Motor neuron (in vitro differentiated cells): ENCODE measurements at regions of chr20 and their contacts with region 1.

Region 1: GRCh38 chr20:62386383-62387218 is at the start of gene RPS21:
- ATAC-seq: peak; percentile 75 to 89 (median 85)
- H3K4me3 ChIP-seq: peak within 1 kb of the TSS; percentile 79 to 97 (median 87)
- H3K27ac ChIP-seq: peak within 1 kb of the TSS; percentile 91 to 92
- H3K4me1 ChIP-seq: peaks cover 11 to 15% of the 10 kb centered on the region in 2 donors
- total RNA-seq, gene RPS21: 960 to 3,776 (median 2,338) TPM

Region 2: DNA sequence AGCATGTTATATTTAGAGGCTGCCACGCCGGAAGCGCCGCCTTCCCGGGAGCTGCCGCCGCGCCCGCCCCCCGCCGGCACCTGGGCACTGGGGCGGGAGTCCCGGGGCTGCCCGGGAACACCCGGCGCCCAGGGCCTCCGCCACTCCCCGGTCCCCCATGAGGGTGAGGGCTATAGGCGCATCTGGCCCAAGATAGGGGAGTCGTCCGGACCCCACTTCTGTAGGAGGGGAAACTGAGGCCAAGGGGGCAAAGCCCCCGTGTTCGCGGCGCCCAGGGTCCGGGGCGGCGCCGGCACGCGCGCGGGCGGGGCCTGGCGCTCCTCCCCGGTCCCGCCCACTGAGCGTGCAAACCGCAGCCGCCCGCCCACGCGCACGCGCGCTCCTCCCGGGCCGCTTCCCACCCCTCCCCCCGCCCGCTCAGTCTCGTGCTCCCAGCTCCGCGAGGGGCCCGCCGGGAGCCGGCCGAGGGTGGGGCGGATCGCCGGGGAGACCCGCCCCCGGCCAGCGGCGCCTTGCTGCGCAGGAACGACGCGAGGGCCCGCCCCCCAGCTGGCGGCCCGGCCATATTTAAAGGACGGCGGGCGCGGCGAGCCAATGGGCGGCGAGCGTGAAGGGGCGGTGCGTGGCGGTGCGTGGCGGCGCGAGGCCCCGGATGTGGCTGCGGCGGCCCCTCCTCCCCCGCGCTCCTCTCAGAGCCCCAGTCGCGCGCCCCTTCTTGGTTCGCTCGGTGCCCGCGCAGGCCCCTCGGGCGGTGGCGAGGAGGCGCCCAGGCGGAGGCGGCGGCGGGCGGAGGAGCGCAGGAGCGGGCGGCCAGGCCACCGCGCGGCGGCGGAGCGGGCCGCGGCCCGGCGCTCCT is 264.6 kb before region 1 on chr20 and contains the start of gene LSM14B:
- in situ Hi-C with region 1: no loop called
- ATAC-seq: peak; percentile 67 to 85 (median 80)
- H3K4me3 ChIP-seq: peak within 1 kb of the TSS; percentile 61 to 85 (median 69)
- H3K27ac ChIP-seq: peak within 1 kb of the TSS; percentile 84 to 92
- H3K4me1 ChIP-seq: peaks cover 20 to 24% of the 10 kb centered on the region in 2 donors
- total RNA-seq, gene LSM14B: 27.2 to 79.3 (median 55.4) TPM

Region 3: GRCh38 chr20:62182613-62183425 is 203.8 kb before region 1 on chr20 and contains the start of gene MTG2:
- in situ Hi-C with region 1: loop called in 1 of 9 experiments (anchors 25 kb)
- ATAC-seq: peak; percentile 92 to 98 (median 96)
- H3K4me3 ChIP-seq: peak within 1 kb of the TSS; percentile 72 to 99 (median 81)
- H3K27ac ChIP-seq: peak within 1 kb of the TSS; percentile 83 to 93
- H3K4me1 ChIP-seq: peaks cover 10 to 13% of the 10 kb centered on the region in 2 donors
- total RNA-seq, gene MTG2: 18.9 to 51.2 (median 27.3) TPM

Region 4: DNA sequence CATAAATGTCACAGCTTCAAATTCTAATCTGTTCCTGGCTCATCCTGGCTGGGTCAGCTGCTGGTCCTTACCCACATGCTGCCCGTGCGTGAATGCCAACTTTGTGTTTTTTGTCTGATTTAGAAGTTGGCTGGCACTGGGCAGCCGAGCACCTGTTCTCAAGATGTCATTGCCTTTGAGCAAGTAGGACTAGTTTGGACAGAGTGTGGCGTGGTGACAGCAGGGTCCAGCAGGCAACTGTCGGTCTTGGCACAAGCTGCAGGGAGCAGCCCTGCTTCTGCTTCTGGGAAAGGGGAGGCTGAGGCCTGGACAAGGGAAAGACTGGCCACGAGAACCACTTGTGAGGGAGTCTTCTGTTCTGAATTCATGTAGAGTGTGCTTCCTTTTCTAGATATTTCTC is 110.2 kb before region 1 on chr20:
- in situ Hi-C with region 1: loop called in 1 of 9 experiments (anchors 25 kb)
- ATAC-seq: no peak
- H3K4me3 ChIP-seq: no peak overlapping the region
- H3K27ac ChIP-seq: no peak overlapping the region
- H3K4me1 ChIP-seq: no peaks in the 10 kb centered on the region

Region 5: GRCh38 chr20:62302341-62303058 is 84.1 kb before region 1 on chr20 and contains the start of gene ADRM1:
- in situ Hi-C with region 1: loop called in 2 of 9 experiments (anchors 10 to 25 kb)
- ATAC-seq: peak; percentile 72 to 91 (median 87)
- H3K4me3 ChIP-seq: peak within 1 kb of the TSS; percentile 71 to 93 (median 84)
- H3K27ac ChIP-seq: peak within 1 kb of the TSS; percentile 87 to 90
- H3K4me1 ChIP-seq: peaks cover 9 to 12% of the 10 kb centered on the region in 2 donors
- total RNA-seq, gene ADRM1: 42.8 to 151 (median 87.9) TPM

Region 6: DNA sequence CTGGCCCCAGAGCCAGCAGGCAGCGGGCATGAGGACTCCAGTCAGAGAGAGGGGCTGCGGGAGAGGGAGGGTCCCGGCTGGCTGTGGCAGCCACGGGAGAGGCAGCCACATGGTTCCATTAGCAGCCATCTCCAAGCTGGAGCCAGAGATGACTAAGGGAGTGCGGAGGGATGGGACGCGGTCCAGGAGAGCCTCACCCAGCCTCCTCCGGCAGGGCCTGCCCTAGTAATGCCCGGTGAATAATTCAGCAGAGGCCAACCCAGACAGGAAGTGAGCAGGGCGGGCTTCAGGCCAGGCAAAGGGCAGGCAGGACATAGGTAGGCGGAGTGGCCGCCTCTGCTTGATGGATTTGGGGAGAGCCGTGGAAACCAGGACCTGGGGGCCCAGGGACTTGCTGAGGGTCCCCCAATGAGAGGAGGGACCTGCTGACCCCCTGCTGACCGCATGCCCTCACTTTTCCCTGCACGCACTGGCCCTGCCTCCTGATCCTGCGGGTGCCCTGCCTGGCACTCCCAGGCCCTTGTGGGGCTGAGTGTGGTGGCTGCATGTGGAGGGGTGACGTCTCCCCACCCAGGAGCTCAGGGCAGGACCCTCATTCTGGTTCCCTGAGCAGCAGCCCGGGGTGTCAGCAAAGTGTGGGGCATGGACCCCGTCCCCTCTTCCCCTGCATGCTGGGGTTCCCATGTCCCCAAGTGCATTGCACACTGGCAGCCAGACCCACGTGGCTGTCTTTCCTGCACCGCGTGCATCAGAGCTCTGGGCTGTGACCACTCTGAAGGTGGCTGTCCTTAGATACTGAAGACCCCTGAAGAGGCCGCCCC is 203.9 kb after region 1 on chr20:
- in situ Hi-C with region 1: no loop called
- ATAC-seq: peak in 6 of 8 experiments; percentile 10 to 99 (median 60)
- H3K4me3 ChIP-seq: no peak overlapping the region
- H3K27ac ChIP-seq: no peak overlapping the region
- H3K4me1 ChIP-seq: peaks cover 21 to 31% of the 10 kb centered on the region in 2 donors